K562 (cell line): ENCODE measurements at regions of chr10 and their contacts with region 1.

Region 1: GRCh38 chr10:71285180-71285545 is 33.9 kb upstream of the SLC29A3 start:
- DNase-seq: peak; percentile 69 to 87 (median 83)
- ATAC-seq: peak; percentile 85
- H3K4me3 ChIP-seq: no peak overlapping the region
- H3K27ac ChIP-seq: no peak overlapping the region
- H3K4me1 ChIP-seq: peaks cover 0 to 12% of the 10 kb centered on the region in 2 experiments; a peak in 3 of 5 replicates
- H3K27me3 ChIP-seq: peaks cover 0 to 27% of the 10 kb centered on the region in 2 experiments; a peak in 2 of 5 replicates
- CTCF ChIP-seq: peak; percentile 82 to 93 (median 86)
- EP300 ChIP-seq: no peak
- POLR2A ChIP-seq: no peak
- RAD21 ChIP-seq: peak; percentile 79 to 92

Region 2: GRCh38 chr10:70903262-70903921 is 381.8 kb before region 1 on chr10:
- CTCF ChIA-PET with region 1: interaction called, 9 read pairs
- POLR2A ChIA-PET with region 1: no interaction called
- in situ Hi-C with region 1: no loop called
- intact Hi-C with region 1: loop called (anchors 5 kb)
- DNase-seq: peak; percentile 73 to 76 (median 74)
- ATAC-seq: peak; percentile 80
- H3K4me3 ChIP-seq: no peak overlapping the region
- H3K27ac ChIP-seq: no peak overlapping the region
- H3K4me1 ChIP-seq: peaks cover 0 to 5% of the 10 kb centered on the region in 2 experiments; a peak in 3 of 5 replicates
- H3K27me3 ChIP-seq: peaks cover 49 to 71% of the 10 kb centered on the region in 2 experiments
- CTCF ChIP-seq: peak; percentile 90 to 98 (median 95)
- EP300 ChIP-seq: no peak
- POLR2A ChIP-seq: no peak
- RAD21 ChIP-seq: peak; percentile 79 to 94

Region 3: DNA sequence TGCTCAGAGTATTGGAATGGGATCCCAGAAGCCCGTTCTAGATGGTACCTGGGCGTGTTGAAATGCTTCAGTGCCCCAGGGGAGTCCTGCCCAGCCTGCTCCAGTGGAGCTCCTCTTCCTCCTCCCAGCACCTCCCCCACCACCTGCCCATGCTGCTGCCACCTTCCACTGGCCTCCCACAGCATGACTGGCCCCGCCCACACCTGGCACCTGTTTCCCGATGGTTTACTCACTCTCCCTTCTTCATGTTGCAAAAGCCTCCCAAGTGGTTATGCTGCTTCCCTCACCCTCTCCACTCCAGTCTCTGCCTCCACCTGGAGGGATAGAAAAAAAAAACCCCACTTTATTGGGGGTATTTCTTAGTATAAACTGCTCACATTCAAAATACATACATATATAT is 364.6 kb before region 1 on chr10:
- CTCF ChIA-PET with region 1: interaction called, 15 read pairs
- POLR2A ChIA-PET with region 1: no interaction called
- in situ Hi-C with region 1: loop called (anchors 5 kb)
- intact Hi-C with region 1: loop called (anchors 5 kb)
- DNase-seq: no peak
- ATAC-seq: no peak
- H3K4me3 ChIP-seq: no peak overlapping the region
- H3K27ac ChIP-seq: no peak overlapping the region
- H3K4me1 ChIP-seq: peaks cover 0 to 7% of the 10 kb centered on the region in 2 experiments; a peak in 2 of 5 replicates
- H3K27me3 ChIP-seq: peaks cover 28 to 80% of the 10 kb centered on the region in 2 experiments
- CTCF ChIP-seq: peak in 1 of 3 experiments; percentile 22; a peak in 2 of 6 replicates
- EP300 ChIP-seq: no peak
- POLR2A ChIP-seq: no peak
- RAD21 ChIP-seq: no peak

Region 4: DNA sequence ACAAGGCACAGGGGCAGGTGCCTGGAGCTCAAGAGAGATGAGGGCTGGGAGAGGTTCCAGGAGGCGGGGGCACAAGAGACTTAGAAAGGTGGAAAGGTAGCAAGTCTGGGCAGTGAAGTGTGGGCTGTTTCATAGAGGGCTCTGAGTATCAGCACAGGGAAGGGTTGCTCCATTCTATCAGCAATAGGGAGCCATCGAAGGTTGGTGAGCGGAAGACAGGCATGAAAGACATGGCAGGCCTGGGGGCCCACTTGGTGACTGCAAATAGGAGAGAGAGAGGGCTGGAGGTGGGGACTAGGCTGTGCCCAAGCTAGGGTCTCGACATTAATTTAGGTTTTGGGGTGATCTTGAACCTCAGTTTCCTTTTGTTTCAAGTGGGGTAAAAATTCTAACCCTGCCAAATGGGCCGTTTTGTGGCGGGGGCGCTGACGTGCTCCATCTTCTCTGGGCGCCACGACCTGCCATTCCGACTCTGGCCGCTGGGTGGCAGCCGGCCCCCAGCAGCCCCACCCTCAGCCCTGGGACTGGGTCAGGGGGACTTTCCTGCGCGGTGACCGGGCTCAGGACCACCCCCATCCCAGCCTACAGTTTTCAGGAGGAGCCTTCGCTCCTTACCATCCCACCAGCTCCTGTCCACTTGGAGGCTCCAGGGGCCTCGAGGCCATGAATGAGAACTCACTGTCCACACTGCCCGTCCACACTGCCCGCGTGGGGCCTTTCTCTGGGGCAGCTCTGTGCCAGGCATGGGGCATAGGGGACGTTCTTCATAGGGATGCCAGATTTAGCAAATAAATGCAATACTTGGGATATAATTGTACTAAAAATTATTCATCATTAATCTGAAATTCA is 359.6 kb before region 1 on chr10:
- CTCF ChIA-PET with region 1: interaction called, 15 read pairs
- POLR2A ChIA-PET with region 1: no interaction called
- in situ Hi-C with region 1: loop called (anchors 5 kb)
- intact Hi-C with region 1: loop called (anchors 5 kb)
- DNase-seq: peak; percentile 71 to 93 (median 88)
- ATAC-seq: peak; percentile 94
- H3K4me3 ChIP-seq: no peak overlapping the region
- H3K27ac ChIP-seq: no peak overlapping the region
- H3K4me1 ChIP-seq: peaks cover 0 to 9% of the 10 kb centered on the region in 2 experiments; a peak in 2 of 5 replicates
- H3K27me3 ChIP-seq: peaks cover 21 to 76% of the 10 kb centered on the region in 2 experiments
- CTCF ChIP-seq: peak; percentile 95 to 97 (median 95)
- EP300 ChIP-seq: no peak
- POLR2A ChIP-seq: no peak
- RAD21 ChIP-seq: peak; percentile 89 to 94

Region 5: DNA sequence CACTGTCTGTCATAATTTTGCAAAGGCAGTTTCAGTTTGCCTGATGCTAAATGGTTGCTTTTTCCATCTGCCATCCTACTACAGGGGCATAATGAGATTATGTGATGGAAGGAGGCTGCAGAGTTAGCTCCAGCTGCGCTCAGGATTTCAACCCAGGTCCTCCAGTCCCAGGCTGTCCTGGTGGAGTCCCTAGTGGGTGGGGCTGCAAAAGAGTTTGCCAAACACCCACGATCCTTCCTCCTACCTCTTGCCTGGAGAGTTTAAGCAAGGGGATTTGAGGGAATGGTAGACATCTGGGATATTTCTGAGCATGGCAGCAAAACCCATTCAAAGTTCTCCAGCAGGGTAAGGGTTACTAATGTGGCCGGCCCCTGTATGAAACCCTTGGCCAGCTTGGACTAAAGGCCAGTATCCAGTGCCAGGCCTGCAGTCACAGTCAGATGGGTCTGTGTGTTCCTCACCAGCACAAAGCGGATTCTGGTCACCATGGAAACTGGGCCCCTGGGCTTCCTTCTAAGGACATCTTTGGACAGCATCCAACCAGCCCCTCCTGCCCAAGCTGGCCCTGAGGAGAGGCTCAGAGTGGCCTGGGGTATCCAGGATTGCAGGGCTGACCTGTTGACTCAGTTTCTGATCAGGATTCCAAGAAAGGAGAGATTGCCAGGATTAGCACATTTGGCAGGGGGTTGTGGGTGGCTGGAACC is 636.3 kb after region 1 on chr10:
- CTCF ChIA-PET with region 1: no interaction called
- POLR2A ChIA-PET with region 1: no interaction called
- in situ Hi-C with region 1: no loop called
- intact Hi-C with region 1: no loop called
- DNase-seq: peak in 2 of 4 experiments; percentile 17 to 47
- ATAC-seq: peak; percentile 28
- H3K4me3 ChIP-seq: no peak overlapping the region
- H3K27ac ChIP-seq: peak overlapping the region; percentile 41; the same call in 1 of the 3 replicates
- H3K4me1 ChIP-seq: peaks cover 16 to 29% of the 10 kb centered on the region in 2 experiments
- H3K27me3 ChIP-seq: peaks cover 5 to 18% of the 10 kb centered on the region in 2 experiments; a peak in 4 of 5 replicates
- CTCF ChIP-seq: no peak
- EP300 ChIP-seq: no peak
- POLR2A ChIP-seq: no peak
- RAD21 ChIP-seq: no peak